Gastrocnemius medialis (tissue), 4 donors: ENCODE measurements at regions of chr4 and their contacts with region 1.

Region 1: GRCh38 chr4:68375667-68376559 is 26.0 kb upstream of the YTHDC1 start:
- DNase-seq: peak in 1 of 2 donors; percentile 5
- ATAC-seq: peak; percentile 45 to 57
- H3K4me3 ChIP-seq: peak overlapping the region in 1 of 4 donors; percentile 32
- H3K27ac ChIP-seq: no peak overlapping the region
- H3K4me1 ChIP-seq: peaks cover 0 to 4% of the 10 kb centered on the region in 2 donors
- H3K27me3 ChIP-seq: peaks cover 0 to 14% (median 7%) of the 10 kb centered on the region in 3 donors
- CTCF ChIP-seq: peak; percentile 56 to 83 (median 71)
- POLR2A ChIP-seq: no peak

Region 2: GRCh38 chr4:68271851-68272756 is 103.8 kb before region 1 on chr4:
- in situ Hi-C with region 1: loop called (anchors 5 kb)
- intact Hi-C with region 1: loop called (anchors 1 kb)
- DNase-seq: no peak
- ATAC-seq: peak in 1 of 2 donors; percentile 42
- H3K4me3 ChIP-seq: no peak overlapping the region
- H3K27ac ChIP-seq: no peak overlapping the region
- H3K4me1 ChIP-seq: no peaks in the 10 kb centered on the region
- H3K27me3 ChIP-seq: no peaks in the 10 kb centered on the region
- CTCF ChIP-seq: peak; percentile 51 to 76 (median 73)
- POLR2A ChIP-seq: no peak

Region 3: DNA sequence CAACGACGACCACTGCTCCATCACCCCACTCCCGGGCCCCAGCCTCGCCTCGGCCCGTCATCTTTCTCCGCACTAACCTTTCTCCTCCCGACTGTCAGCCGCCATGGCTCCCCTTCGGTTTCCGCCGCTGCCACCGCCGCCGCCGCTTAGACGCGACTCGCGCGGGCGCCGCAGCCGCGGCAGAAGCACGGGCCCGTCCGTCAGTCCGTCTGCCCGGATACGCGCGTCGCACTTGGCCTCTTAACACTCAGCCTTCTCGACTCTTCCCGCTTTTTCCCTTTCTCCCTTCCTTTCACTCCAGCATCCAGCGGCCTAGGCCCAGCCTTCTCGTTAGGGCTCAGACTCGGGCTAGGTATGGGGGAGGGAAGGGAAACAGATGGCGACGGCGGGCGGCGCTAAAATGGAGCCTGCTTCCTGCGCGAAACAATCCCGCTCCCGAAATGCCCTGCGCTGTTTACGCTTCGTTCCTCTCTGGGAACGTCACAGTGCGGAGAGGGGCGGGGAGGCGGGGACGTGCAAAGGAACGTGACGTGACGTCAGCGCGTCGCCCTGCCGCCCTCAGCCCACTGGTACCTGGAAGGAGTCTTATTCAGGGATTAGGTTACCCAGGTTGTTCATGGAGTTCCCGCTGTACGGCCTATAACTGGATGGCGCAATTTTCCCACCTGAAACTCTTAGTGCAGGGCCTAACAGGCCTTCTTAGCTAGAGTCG is 26.1 kb before region 1 on chr4 and contains the start of gene YTHDC1:
- in situ Hi-C with region 1: no loop called
- intact Hi-C with region 1: loop called (anchors 2 kb)
- DNase-seq: peak; percentile 93 to 94
- ATAC-seq: peak; percentile 95 to 97
- H3K4me3 ChIP-seq: peak within 1 kb of the TSS; percentile 84 to 95 (median 90)
- H3K27ac ChIP-seq: peak within 1 kb of the TSS; percentile 94 to 97 (median 96)
- H3K4me1 ChIP-seq: peaks cover 31 to 36% of the 10 kb centered on the region in 2 donors
- H3K27me3 ChIP-seq: no peaks in the 10 kb centered on the region
- CTCF ChIP-seq: no peak
- POLR2A ChIP-seq: peak; percentile 92 to 97
- total RNA-seq, gene YTHDC1: 28.0 to 73.1 (median 34.9) TPM

Region 4: GRCh38 chr4:68447201-68447600 is 71.3 kb after region 1 on chr4 and contains the start of gene TMPRSS11E:
- in situ Hi-C with region 1: no loop called
- intact Hi-C with region 1: no loop called
- DNase-seq: no peak
- ATAC-seq: no peak
- H3K4me3 ChIP-seq: no peak within 1 kb of the TSS
- H3K27ac ChIP-seq: no peak within 1 kb of the TSS
- H3K4me1 ChIP-seq: no peaks in the 10 kb centered on the region
- H3K27me3 ChIP-seq: no peaks in the 10 kb centered on the region
- CTCF ChIP-seq: no peak
- POLR2A ChIP-seq: no peak
- total RNA-seq, gene TMPRSS11E: not detected

Region 5: DNA sequence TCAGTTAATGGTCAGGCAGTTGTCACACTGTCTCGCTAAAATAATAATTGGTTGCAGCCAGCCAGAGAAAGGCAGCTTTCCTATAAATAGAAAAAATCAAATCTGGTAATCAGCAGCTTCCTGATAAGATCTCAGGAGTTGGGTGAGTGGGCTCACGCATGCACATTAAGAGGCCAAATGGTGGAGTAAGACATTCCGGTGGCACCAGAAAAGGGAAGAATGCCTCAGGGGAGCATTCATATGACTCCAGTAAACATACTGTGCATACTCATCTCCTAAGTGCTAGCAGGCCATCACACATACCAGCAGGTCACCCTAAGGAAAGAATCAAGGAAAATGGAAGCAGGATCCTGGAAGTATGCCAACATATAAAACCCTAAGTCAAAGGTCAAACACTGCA is 254.5 kb after region 1 on chr4:
- in situ Hi-C with region 1: no loop called
- intact Hi-C with region 1: no loop called
- DNase-seq: no peak
- ATAC-seq: no peak
- H3K4me3 ChIP-seq: no peak overlapping the region
- H3K27ac ChIP-seq: no peak overlapping the region
- H3K4me1 ChIP-seq: no peaks in the 10 kb centered on the region
- H3K27me3 ChIP-seq: no peaks in the 10 kb centered on the region
- CTCF ChIP-seq: no peak
- POLR2A ChIP-seq: no peak

Region 6: DNA sequence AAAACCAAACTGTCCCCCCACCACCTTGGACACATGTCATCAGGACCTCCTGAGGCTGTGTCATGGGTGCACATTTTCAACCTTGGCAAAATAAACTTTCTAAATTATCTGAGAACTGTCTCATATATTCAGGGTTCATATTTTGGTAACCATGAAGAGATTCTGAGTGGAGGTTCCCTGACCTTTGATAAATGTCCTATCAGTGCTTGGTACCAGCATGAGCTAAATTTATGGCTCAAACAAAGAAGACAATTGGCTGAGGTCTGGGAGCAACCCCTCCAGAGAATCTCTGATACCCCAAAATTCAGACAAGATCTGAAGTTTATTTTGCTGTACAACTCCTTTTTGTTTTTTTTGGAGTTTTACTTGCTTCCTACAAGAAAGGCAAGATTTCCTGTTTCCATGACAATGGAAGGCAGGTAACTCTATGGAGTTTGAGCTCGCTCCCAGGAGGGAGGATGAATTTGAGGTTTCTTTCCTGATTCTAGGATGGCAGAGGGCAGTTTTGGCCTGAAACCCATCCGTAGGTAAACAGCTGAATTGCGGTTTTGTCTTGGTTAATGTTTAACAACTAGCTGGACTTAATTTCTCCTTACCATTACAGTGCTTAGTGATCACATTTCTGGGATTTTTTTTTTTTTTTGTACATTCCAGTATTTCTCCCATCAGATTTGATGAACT is 280.0 kb after region 1 on chr4:
- in situ Hi-C with region 1: no loop called
- intact Hi-C with region 1: no loop called
- DNase-seq: no peak
- ATAC-seq: no peak
- H3K4me3 ChIP-seq: no peak overlapping the region
- H3K27ac ChIP-seq: no peak overlapping the region
- H3K4me1 ChIP-seq: no peaks in the 10 kb centered on the region
- H3K27me3 ChIP-seq: no peaks in the 10 kb centered on the region
- CTCF ChIP-seq: no peak
- POLR2A ChIP-seq: no peak